Tibial artery (tissue), 4 donors: ENCODE measurements at regions of chr13 and their contacts with region 1.

Region 1: DNA sequence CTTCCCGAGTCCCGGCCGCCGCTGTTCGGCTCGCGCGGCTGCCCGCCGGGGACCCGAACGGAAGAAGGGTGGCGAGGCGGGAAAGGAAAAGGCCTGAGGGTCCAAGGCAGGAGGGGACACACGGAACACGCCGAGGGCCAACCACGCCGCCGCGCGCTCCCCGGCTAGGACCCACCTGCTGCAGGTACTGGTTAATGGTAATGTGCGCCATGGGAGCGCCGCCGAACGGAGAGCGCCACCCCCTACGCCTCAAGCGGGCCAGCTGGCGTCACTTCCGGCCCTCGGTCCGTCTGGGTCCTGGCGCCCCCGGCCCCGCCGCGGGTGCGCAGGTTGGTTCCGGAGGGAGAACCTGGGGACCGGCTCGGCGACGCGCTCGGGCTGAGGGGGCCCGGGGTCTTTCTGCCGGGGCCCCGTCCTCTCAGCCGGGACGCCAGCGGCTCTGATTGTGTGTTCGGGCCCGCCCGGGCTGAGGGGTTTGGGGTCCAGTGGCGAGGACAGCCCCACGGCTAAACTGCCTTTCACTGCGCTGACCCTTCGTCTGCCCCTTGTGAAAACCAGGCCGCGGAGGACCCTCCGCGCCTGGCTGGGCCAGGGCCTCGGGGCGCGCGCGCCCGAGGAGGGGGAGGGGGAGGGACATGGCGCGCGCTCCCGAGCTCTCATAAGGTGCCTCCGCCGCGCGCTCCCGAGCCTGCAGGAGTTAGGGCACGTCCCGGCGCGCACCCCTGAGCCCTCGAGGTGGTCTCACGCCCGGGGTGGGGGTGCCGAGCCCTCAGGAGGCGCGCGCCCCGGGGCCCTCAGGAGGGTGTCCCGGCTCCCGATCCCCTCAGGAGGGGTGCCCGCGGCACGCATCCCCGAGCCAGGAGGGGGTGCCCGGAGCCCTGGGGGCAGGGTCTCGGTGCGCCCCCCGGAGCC is at the start of gene PCID2:
- DNase-seq: peak; percentile 88 to 92
- H3K4me3 ChIP-seq: peak within 1 kb of the TSS; percentile 80 to 99
- H3K27ac ChIP-seq: peak within 1 kb of the TSS; percentile 97 to 98
- H3K4me1 ChIP-seq: peaks cover 0 to 59% (median 44%) of the 10 kb centered on the region in 4 donors
- H3K27me3 ChIP-seq: no peaks in the 10 kb centered on the region
- CTCF ChIP-seq: no peak

Region 2: GRCh38 chr13:112803422-112803821 is 405.3 kb before region 1 on chr13:
- intact Hi-C with region 1: no loop called
- DNase-seq: no peak
- H3K4me3 ChIP-seq: no peak overlapping the region
- H3K27ac ChIP-seq: no peak overlapping the region
- H3K4me1 ChIP-seq: no peaks in the 10 kb centered on the region
- H3K27me3 ChIP-seq: no peaks in the 10 kb centered on the region
- CTCF ChIP-seq: no peak

Region 3: GRCh38 chr13:112942689-112943308 is 265.9 kb before region 1 on chr13:
- intact Hi-C with region 1: loop called (anchors 10 kb)
- DNase-seq: peak; percentile 95 to 99
- H3K4me3 ChIP-seq: peak overlapping the region; percentile 36 to 61
- H3K27ac ChIP-seq: no peak overlapping the region
- H3K4me1 ChIP-seq: peaks cover 0 to 13% (median 12%) of the 10 kb centered on the region in 4 donors
- H3K27me3 ChIP-seq: peaks cover 0 to 38% of the 10 kb centered on the region in 2 donors
- CTCF ChIP-seq: peak; percentile 86 to 92

Region 4: DNA sequence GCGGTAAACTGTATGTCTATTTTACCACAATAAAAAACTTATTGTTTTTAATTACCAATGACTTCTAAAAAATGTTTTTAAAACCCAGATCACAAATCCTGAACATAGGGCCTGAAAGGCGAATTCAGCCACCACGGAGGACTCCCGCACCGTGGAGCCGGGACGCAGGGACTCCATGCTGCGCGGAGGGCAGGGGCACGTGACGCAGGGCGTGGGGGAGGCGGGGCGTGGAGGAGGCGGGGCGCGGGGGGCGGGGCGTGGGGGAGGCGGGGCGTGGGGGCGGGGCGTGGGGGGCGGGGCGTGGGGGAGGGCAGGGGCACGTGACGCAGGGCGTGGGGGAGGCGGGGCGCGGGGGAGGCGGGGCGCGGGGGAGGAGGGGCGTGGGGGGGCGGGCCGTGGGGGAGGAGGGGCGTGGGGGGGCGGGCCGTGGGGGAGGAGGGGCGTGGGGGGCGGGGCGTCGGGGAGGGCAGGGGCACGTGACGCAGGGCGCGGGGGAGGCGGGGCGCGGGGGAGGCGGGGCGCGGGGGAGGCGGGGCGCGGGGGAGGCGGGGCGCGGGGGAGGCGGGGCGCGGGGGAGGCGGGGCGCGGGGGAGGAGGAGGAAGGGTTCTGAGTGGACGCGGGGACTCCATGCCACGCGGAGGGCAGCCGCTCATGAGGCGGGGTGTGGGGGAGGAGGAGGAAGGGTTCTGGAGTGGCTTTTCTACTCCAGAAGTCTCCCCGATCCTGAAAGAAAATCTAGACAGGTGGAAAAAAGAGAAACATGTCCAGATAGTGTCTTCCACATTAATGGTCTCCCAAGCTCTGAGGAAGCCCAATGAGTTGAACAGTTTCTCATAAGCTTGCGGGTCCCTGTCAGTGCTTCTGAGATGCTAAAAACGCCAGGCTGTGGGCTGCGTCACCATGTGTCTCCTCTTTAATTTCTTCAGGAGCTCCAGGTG is 54.6 kb before region 1 on chr13:
- intact Hi-C with region 1: loop called (anchors 10 kb)
- DNase-seq: peak; percentile 80 to 89
- H3K4me3 ChIP-seq: peak overlapping the region; percentile 48 to 57
- H3K27ac ChIP-seq: peak overlapping the region; percentile 73 to 83
- H3K4me1 ChIP-seq: peaks cover 0 to 19% (median 8%) of the 10 kb centered on the region in 4 donors
- H3K27me3 ChIP-seq: peaks cover 0 to 2% of the 10 kb centered on the region in 2 donors
- CTCF ChIP-seq: no peak

Region 5: DNA sequence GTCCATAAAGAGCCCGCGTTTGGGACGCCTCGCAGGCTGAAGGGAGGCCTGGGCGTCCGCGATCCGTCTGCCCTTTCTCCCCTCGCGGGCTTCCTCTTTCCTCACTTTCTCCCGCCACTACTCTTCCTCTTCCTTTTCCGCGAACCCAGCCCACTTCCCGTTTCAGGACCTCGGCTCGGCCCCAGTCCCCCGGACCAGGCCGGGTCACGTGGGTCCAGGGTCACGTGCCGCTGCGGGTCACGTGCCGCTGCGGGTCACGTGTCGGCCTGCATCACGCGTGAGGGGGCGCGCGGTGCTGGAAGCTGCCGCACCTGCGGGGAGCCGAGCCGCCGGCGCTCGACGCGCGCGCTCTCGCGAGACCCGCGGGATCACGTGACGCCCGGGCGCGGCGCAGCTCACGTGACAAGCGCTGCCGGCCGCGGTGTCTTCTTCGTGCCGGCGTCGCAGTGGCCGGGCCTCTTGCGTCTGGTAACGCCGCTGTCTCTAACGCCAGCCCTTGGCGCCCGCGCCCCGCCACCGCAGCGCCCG is 88.2 kb after region 1 on chr13 and contains the start of gene LAMP1:
- intact Hi-C with region 1: loop called (anchors 5 kb)
- DNase-seq: peak; percentile 97 to 99
- H3K4me3 ChIP-seq: peak within 1 kb of the TSS; percentile 72 to 99
- H3K27ac ChIP-seq: peak within 1 kb of the TSS; percentile 92 to 93
- H3K4me1 ChIP-seq: peaks cover 0 to 31% (median 21%) of the 10 kb centered on the region in 4 donors
- H3K27me3 ChIP-seq: no peaks in the 10 kb centered on the region
- CTCF ChIP-seq: peak in 1 of 2 experiments; percentile 30

Region 6: DNA sequence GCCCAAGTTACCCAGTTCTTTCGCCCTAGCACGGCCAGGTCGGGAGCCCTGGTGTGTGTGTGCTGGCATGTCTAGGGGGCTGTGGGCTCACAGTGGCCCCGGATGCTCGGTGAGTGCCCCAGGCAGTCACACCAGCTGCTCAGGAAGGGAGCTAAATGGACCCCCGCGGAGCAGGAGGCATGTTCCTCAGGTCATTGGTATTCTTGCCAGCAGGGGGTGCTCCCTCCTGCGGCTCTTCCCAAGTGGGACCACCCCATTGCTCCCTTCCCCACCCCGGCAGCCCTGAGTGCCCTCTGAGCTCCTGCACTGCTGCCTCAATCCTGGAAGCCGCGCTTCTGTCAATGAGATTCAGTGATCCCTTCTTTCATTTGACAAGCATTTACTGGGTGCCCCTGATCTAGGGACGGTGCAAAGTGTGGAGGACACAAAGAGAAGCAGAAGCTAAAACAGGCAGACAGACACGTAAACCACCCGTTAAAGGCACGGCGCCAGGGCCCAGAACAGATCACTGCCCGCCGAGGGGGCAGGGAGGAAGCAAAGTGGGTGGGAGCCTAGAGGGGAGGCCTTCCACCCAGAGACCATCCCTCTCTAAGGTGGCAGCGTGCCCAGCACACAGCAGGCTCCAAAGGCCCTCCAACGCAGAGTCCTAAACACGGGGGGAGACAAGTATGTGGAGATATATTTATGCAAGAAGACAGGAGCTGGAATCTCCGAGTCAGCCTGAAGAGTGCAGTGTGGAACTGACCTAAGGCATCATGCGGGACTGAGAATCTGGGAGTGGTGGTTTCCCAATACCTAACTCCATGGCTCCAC is 249.8 kb after region 1 on chr13:
- intact Hi-C with region 1: loop called (anchors 10 kb)
- DNase-seq: no peak
- H3K4me3 ChIP-seq: no peak overlapping the region
- H3K27ac ChIP-seq: no peak overlapping the region
- H3K4me1 ChIP-seq: no peaks in the 10 kb centered on the region
- H3K27me3 ChIP-seq: no peaks in the 10 kb centered on the region
- CTCF ChIP-seq: no peak